ENCODE measurements at regions of chr3 and their contacts with region 1.

Region 1: DNA sequence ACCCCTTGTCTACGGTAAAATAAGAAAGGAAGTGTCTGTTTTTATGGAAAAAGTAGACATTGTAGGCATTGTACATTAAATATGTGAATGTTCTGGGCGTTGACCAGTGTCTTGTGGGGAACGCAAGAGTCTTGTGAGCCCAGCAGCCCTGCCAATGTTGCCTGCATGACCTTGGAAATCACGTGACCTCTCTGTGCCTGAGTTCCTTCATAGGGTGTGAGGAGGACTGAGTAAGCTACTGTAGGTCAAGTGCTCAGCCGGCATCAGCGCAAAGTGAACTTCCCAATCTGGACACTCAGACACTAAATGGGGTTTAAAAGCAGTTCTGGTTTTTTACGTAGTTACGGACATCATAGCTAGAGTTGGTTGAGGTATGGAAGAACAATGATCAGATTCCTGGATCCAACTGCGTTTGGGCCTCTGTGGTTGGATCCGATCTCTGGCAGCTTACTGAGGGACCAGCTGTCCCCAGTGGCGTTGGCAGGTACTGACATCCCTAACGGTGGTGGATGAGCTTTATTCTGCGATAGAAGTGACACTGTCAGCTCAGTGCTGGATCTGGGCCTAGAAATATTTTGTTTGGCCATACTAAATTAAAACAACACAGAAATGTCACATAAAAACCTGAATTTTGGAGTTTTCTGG is 63.8 kb downstream of the SPSB4 start:
- DNase-seq: peak; percentile 50
- H3K4me3 ChIP-seq: no peak overlapping the region
- H3K27ac ChIP-seq: no peak overlapping the region
- H3K4me1 ChIP-seq: no peaks in the 10 kb centered on the region
- H3K27me3 ChIP-seq: no peaks in the 10 kb centered on the region
- CTCF ChIP-seq: peak; percentile 28; the same call in 1 of the 2 replicates
- EP300 ChIP-seq: no peak
- RAD21 ChIP-seq: peak; percentile 13; the same call in 1 of the 2 replicates

Region 2: GRCh38 chr3:141129541-141130011 is 14.6 kb after region 1 on chr3:
- CTCF ChIA-PET with region 1: interaction called, 17 read pairs
- POLR2A ChIA-PET with region 1: no interaction called
- DNase-seq: no peak
- H3K4me3 ChIP-seq: no peak overlapping the region
- H3K27ac ChIP-seq: no peak overlapping the region
- H3K4me1 ChIP-seq: peaks cover 0 to 18% of the 10 kb centered on the region in 2 experiments; a peak in 1 of 4 replicates
- H3K27me3 ChIP-seq: no peaks in the 10 kb centered on the region
- CTCF ChIP-seq: no peak
- EP300 ChIP-seq: no peak
- RAD21 ChIP-seq: no peak